ENCODE measurements at regions of chr5 and their contacts with region 1.

Region 1: DNA sequence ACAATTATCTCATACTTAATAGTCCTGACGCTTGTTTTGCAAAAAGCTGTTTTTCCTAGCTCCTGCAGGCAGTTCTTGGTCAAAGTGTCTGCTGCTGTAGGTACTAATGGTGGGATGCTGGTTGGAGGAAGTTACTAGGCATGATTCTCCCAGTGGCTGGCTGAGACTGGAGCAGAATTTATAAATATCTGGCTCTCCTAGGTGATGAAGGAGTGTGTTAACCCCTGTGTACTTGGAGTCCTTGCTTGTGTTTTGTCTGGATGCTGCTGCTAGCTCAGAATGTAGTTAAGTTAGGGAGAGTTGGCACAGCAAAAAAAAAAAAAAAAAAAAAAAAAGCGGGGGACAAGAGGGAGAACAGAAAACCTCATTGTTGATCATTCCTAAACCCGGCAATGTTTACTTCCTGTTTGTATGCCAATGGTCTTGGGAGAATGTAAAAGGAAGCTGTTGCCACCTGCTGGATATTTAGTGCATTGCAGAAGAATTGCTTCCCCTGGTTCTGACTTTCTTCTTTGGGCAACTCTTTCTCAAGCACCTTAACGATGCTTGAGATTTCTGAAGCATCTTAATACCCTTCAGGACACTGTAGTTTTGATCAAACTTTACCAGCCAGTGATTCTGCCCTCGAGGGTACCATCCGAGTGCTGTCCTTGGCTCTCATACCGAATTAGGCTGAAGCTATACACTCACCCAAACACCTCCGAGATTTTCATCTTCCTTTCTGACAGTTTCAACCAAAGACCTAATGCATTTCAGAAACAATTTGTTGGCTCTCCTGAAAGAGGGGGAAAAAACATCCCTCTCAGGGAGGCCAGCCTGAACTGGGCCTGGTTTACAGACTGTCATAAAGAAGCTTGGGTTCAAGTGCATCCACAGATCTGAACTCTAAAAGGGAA is 71.7 kb upstream of the WWC1 start:
- DNase-seq: no peak
- ATAC-seq: peak; percentile 55

Region 2: DNA sequence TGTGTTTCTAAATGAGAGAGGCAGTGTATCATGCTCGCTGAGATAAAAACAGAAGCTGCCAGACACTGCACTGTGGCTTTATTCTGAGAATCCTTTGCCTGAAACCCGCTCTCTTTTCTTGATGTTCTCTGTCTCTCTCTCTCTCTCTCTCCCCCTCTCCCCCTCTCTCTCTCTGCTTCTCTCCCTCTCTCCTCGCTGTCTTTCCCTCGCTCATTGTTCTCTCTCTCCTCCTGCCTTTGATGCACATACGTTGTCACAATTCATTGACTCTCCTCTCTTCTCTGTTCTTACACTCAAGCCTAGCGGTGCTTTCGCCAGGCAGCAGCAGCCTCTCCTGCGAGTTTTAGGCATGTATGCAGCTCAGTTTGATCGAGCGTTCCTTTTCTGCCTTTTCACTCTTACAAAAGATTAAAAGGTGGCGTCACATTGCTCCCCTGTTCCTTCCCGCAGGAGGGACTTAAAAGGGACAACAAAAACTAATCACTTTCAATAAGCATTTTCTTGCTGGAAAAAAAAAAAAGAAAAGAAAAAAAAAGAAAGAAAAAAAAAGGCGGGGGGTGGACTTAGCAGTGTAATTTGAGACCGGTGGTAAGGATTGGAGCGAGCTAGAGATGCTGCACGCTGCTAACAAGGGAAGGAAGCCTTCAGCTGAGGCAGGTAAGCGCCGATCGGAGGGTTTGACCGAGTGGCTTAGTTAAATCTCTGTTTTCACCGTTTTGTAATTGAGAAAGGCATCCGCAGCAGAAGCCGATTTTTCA is 646.2 kb before region 1 on chr5:
- intact Hi-C with region 1: loop called (anchors 10 kb)
- DNase-seq: no peak
- ATAC-seq: no peak

Region 3: DNA sequence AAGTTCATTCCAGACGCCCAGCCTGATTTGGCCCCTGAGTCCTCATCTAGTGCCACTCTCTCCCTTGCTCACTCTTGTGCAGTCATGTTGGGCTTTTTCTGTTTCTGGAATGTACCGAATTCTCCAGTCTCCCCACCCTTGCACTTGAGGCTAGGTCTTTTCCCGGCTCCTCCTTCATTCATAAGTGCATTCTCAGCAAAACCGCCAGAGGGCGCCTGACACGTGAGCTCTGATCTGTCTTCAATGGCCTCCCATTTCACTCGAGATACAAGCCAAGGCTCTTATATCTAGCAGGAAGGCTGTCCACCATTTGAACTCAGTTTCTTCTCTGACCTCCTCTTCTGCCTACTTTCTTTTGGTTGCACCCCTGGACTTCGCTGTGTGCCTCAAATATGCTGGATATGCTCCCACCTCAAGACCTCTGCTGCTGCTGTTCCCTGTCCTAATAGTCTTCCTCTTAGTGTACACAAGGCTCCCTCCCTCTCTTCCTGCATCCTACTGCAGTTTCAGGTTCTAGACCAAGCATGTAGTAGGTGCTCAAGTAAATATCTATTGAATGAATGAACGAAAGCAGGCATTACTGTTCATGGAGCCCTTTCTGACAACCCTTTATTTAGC is 496.4 kb before region 1 on chr5:
- intact Hi-C with region 1: loop called (anchors 5 kb)
- DNase-seq: peak; percentile 80
- ATAC-seq: peak; percentile 82

Region 4: GRCh38 chr5:168123631-168124528 is 95.9 kb before region 1 on chr5:
- intact Hi-C with region 1: loop called (anchors 5 kb)
- DNase-seq: no peak
- ATAC-seq: no peak

Region 5: GRCh38 chr5:168152660-168153059 is 67.1 kb before region 1 on chr5:
- intact Hi-C with region 1: no loop called
- DNase-seq: no peak
- ATAC-seq: no peak

Region 6: GRCh38 chr5:168579488-168580226 is 359.9 kb after region 1 on chr5:
- intact Hi-C with region 1: no loop called
- DNase-seq: peak; percentile 98
- ATAC-seq: peak; percentile 99